ENCODE measurements at regions of chr4 and their contacts with region 1.

Region 1: DNA sequence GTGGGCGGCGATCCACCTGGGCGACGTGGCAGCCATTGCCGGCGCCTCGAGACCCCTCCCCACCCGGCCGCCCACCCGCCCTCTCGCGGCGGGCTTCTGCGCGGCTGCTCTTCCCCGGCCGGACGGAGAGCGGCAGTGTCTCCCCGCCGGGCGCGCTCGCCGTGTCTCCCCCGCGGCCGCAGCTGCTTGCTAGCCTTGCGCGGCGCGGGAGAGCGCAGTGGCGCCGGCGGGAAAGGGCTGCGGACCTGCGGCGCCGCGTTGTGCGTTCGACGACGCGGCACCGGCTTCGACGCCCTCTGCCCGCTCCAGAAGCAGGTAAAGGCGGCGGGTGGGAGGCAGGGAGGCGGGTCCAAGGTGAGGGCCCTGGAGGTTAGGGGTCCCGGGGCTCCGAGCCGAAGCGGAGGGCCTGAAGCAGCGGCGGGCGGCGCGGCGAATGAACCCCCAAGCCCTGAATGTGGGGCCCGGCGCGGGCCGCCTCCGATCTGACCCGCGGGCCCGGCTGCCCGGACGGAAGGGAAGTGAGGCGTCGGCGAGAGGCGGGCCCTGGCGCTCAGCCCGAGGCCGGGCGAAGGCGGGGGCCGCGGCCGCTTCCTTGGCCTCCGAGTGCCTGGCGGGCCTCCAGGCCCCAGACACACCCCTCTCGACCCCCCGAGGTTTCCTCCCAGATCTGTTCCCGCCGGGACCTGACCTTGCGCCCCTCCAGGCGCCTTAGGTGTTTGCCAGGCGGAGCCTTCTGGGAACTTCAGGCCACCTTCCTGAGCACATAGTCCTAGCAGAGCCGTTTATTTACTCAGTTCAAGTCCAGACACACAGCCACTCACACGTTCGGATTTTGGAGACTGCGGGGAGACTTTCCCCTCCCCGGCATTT is at the start of gene N4BP2:
- DNase-seq: peak; percentile 92
- H3K4me3 ChIP-seq: peak within 1 kb of the TSS; percentile 79
- H3K27ac ChIP-seq: peak within 1 kb of the TSS; percentile 79
- H3K4me1 ChIP-seq: peaks cover 38% of the 10 kb centered on the region
- CTCF ChIP-seq: peak; percentile 76
- total RNA-seq, gene N4BP2: 11.4 and 12.5 TPM in 2 replicates

Region 2: DNA sequence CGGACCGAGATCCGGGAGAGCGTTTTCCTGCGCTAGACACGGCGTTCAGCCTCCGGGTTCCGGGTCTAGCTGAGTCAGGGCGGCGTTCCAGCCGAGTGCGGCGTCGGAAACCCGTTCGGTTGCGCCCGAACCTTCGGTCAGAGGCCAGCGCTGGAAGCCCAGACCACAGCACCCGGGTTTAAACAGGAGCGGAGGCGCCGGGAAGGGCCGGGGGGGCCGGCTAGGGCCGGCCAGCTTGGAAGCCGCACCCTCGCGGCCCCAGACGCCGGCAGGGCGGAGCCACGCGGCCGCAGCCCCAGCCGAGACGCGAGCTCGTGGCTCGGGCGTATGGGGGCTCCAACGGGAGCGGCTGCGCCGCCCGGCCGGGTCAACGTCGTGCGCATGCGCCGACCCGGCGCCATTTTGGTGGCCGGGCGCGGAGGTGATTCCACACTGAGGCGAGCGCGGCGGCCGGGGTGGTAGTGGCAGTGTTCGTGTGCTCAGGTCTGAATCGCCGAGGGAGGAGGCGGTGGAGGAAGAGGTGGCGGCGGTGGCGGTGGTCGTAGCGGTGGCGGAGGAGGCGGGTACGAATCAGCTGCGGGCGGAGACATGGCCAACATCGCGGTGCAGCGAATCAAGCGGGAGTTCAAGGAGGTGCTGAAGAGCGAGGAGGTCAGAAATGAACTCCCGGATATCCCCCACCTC is 359.1 kb before region 1 on chr4 and contains the start of gene UBE2K:
- CTCF ChIA-PET with region 1: no interaction called
- POLR2A ChIA-PET with region 1: interaction called, 5 read pairs
- intact Hi-C with region 1: loop called (anchors 5 kb)
- DNase-seq: peak; percentile 93
- H3K4me3 ChIP-seq: peak within 1 kb of the TSS; percentile 98
- H3K27ac ChIP-seq: peak within 1 kb of the TSS; percentile 74
- H3K4me1 ChIP-seq: peaks cover 29% of the 10 kb centered on the region
- CTCF ChIP-seq: no peak
- total RNA-seq, gene UBE2K: 20.8 and 47.7 TPM in 2 replicates

Region 3: GRCh38 chr4:40149960-40150385 is 93.0 kb after region 1 on chr4:
- CTCF ChIA-PET with region 1: no interaction called
- POLR2A ChIA-PET with region 1: no interaction called
- intact Hi-C with region 1: loop called (anchors 5 kb)
- DNase-seq: peak; percentile 93
- H3K4me3 ChIP-seq: no peak overlapping the region
- H3K27ac ChIP-seq: no peak overlapping the region
- H3K4me1 ChIP-seq: peaks cover 22% of the 10 kb centered on the region
- CTCF ChIP-seq: peak; percentile 92

Region 4: GRCh38 chr4:40316782-40317635 is 260.1 kb after region 1 on chr4:
- CTCF ChIA-PET with region 1: interaction called, 4 read pairs
- POLR2A ChIA-PET with region 1: interaction called, 7 read pairs
- intact Hi-C with region 1: loop called (anchors 2 kb)
- DNase-seq: peak; percentile 86
- H3K4me3 ChIP-seq: peak overlapping the region; percentile 46
- H3K27ac ChIP-seq: peak overlapping the region; percentile 41
- H3K4me1 ChIP-seq: peaks cover 16% of the 10 kb centered on the region
- CTCF ChIP-seq: peak; percentile 90

Region 5: GRCh38 chr4:40515398-40516293 is 458.7 kb after region 1 on chr4:
- CTCF ChIA-PET with region 1: interaction called, 5 read pairs
- POLR2A ChIA-PET with region 1: no interaction called
- intact Hi-C with region 1: loop called (anchors 10 kb)
- DNase-seq: peak; percentile 91
- H3K4me3 ChIP-seq: peak overlapping the region; percentile 70
- H3K27ac ChIP-seq: peak overlapping the region; percentile 89
- H3K4me1 ChIP-seq: peaks cover 65% of the 10 kb centered on the region
- CTCF ChIP-seq: no peak

Measured in OCI-LY7 (cell line).